ENCODE measurements at regions of chr6 and their contacts with region 1.

Region 1: DNA sequence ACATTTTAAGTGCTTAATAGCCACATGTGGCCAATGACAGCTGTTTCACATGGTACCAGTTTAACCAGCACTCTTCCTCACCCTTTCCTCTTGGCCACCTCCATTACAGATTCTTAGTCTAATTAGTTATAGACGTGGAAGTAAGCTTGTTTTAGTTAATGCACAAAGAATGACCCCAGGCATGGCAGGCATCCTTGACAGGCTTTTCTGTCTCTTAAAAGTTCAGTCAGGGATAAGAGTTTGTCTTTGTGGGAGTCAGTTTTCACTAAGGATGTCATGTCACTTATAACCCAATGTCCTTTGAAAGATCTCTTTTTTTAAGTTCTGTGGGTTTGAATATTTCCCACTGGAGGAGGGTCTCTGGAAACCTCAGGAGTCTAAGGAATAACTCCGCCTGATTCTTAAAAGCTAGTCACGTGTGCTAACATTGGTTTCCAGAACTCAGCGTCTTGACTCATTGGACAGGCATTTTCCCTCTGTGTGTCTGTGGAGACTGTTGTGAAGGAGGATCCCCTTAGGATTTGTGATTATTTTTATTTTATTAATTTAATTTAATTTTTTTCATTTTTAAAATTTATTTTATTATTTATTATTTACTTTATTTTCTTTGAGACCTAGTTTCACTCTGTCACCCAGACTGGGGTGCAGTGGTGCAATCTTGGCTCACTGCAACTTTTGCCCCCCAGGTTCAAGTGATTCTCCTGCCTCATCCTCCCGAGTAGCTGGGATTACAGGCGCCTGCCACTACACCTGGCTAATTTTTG is 171.4 kb downstream of the ZFAND3 start:
- DNase-seq: peak in 1 of 2 donors; percentile 23
- ATAC-seq: peak; percentile 74 to 83
- H3K4me3 ChIP-seq: no peak overlapping the region
- H3K27ac ChIP-seq: peak overlapping the region; percentile 46 to 65 (median 58)
- H3K4me1 ChIP-seq: peaks cover 87 to 94% of the 10 kb centered on the region in 2 donors
- H3K27me3 ChIP-seq: no peaks in the 10 kb centered on the region
- CTCF ChIP-seq: no peak
- POLR2A ChIP-seq: no peak

Region 2: DNA sequence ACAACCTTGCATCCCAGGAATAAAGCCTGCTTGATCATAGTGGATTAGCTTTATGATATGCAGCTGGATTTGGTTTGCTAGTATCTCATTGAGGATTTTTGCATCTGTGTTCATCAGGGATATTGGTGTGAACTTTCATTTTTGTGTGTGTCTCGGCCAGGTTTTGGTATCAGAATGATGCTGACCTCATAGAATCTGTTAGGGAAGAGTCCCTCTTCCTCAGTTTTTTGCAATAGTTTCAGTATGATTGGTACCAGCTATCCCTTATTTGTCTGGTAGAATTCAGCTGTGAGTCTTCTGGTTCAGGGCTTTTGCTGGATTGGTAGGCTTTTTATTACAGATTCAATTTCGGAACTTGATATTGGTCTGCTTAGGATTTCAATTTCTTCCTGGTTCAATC is 38.9 kb before region 1 on chr6:
- in situ Hi-C with region 1: no loop called
- intact Hi-C with region 1: loop called (anchors 5 kb)
- DNase-seq: no peak
- ATAC-seq: no peak
- H3K4me3 ChIP-seq: no peak overlapping the region
- H3K27ac ChIP-seq: no peak overlapping the region
- H3K4me1 ChIP-seq: peaks cover 39 to 71% of the 10 kb centered on the region in 2 donors
- H3K27me3 ChIP-seq: no peaks in the 10 kb centered on the region
- CTCF ChIP-seq: no peak
- POLR2A ChIP-seq: no peak

Measured in gastrocnemius medialis (tissue), 4 donors.